ENCODE measurements at regions of chr14 and their contacts with region 1.

Region 1: DNA sequence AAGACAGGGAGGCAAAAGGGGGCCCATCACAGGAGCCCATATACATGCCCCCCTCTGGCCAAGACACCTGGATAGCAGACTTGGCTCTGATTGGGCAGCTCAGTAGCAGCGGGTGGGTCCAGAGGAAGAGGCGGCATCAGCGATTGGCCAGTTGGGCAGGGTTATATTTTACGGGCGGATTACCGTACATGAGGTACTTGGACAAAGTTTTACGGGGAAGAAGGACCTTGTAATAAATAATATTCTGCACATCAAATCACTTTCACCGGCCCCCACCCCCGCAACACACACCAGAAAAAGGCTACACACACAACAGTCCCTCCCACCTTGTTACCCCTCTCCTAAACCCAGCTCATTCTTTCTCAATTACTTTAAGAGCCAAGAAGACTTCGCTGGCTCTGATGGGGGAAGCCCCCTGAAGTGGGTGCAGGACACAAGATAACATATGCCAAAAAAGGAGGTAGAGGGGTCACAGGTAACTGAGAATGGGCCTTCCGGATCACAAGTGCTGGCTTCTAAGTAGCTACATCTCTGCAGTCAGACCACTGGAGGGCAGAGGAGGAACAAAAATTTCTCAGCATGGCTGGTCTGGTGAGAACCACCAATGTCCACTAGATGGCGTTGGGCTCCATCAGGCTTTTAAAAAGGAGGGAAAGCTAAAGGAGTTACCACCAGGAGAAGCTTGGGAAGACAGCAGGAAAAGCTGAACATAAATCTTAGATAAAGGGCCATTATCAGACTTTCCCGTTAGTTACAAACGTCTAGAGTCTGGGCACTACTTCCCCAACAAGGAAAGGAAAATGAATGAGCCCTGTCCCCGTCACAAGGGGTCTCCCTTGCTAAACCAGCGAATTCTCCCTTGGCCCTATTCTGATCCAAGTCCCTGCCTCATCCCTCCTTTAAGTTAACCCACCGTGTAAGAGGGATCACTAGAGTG is 11.4 kb upstream of the CDH24 start:
- DNase-seq: peak; percentile 84
- ATAC-seq: peak; percentile 79
- H3K4me3 Mint-ChIP-seq: peak overlapping the region; percentile 47
- H3K27ac Mint-ChIP-seq: peak overlapping the region; percentile 69
- H3K4me1 Mint-ChIP-seq: peaks cover 36% of the 10 kb centered on the region
- H3K27me3 Mint-ChIP-seq: no peaks in the 10 kb centered on the region
- CTCF ChIP-seq: peak; percentile 96

Region 2: GRCh38 chr14:22955702-22956569 is 112.8 kb before region 1 on chr14:
- CTCF ChIA-PET with region 1: interaction called, 18 read pairs
- POLR2A ChIA-PET with region 1: interaction called, 5 read pairs
- intact Hi-C with region 1: no loop called
- DNase-seq: no peak
- ATAC-seq: no peak
- H3K4me3 Mint-ChIP-seq: peak overlapping the region; percentile 93
- H3K27ac Mint-ChIP-seq: peak overlapping the region; percentile 93
- H3K4me1 Mint-ChIP-seq: peaks cover 25% of the 10 kb centered on the region
- H3K27me3 Mint-ChIP-seq: no peaks in the 10 kb centered on the region
- CTCF ChIP-seq: no peak

Region 3: DNA sequence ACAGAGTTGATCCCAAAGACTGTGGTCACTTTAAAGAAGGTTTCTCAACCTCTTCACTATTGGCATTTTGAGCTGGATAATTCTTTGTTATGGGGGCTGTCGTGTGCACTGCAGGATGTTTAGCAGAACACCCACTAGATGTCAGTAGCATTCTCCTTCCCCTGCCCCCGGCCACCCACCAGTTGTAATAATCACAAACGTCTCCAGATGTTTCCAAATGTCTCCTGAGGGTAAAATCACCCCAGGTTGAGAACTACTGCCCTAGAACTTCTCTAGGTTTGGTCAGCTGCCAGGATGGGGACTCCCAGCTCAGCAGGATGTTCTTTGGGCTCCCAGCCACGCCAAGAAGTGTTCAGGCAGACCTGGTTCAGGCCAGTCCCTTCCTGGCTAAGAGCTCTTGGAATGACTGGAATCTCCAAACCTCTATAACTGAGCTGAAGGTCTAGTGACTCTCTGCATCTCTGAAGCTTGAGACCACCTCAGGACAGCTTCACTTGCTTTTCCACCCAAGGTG is 73.9 kb before region 1 on chr14:
- CTCF ChIA-PET with region 1: interaction called, 518 read pairs
- POLR2A ChIA-PET with region 1: interaction called, 3 read pairs
- intact Hi-C with region 1: no loop called
- DNase-seq: peak; percentile 57
- ATAC-seq: peak; percentile 94
- H3K4me3 Mint-ChIP-seq: no peak overlapping the region
- H3K27ac Mint-ChIP-seq: no peak overlapping the region
- H3K4me1 Mint-ChIP-seq: peaks cover 3% of the 10 kb centered on the region
- H3K27me3 Mint-ChIP-seq: no peaks in the 10 kb centered on the region
- CTCF ChIP-seq: peak; percentile 59

Region 4: GRCh38 chr14:23057757-23058653 is 10.7 kb before region 1 on chr14:
- CTCF ChIA-PET with region 1: interaction called, 196 read pairs
- POLR2A ChIA-PET with region 1: interaction called, 12 read pairs
- intact Hi-C with region 1: no loop called
- DNase-seq: peak; percentile 91
- ATAC-seq: peak; percentile 73
- H3K4me3 Mint-ChIP-seq: peak overlapping the region; percentile 76
- H3K27ac Mint-ChIP-seq: no peak overlapping the region
- H3K4me1 Mint-ChIP-seq: peaks cover 19% of the 10 kb centered on the region
- H3K27me3 Mint-ChIP-seq: peaks cover 7% of the 10 kb centered on the region
- CTCF ChIP-seq: peak; percentile 94

Region 5: DNA sequence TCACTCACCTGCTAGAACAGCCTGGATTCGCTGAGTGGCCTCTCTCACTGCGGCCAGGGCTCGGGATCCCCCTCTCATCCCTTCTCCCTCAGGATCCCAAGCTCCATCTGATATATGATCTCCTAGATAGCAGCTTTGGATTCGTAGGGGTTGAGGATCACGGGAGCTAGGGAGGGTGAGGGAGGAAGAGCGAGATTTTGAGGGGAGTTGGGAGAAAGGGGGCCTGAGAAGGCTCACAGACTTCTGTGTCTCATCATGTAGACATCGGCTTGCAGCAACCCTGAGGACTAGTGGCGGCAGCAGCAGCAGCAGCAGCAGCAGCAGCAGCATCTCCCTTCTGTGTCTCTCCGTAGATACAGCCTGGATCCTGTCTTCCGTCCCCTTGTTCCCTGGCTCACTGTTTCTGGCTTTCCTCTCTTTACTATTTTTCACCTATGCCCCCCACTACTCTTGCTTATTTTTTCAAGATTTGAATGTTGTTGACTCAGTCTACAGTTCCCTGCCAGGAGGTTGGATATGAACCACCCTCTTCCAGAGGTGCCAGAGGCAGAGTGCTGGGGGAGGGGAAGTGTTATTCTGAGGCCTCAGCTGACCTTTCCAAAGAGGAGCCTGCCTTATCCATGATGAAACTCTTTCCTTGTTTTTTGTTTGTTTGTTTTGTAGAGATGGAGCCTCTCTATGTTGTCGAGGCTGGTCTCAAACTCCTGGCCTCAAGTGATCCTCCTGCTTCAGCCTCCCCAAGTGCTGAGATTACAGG is 36.0 kb after region 1 on chr14 and contains the start of gene CIROP:
- CTCF ChIA-PET with region 1: interaction called, 20 read pairs
- POLR2A ChIA-PET with region 1: no interaction called
- intact Hi-C with region 1: no loop called
- DNase-seq: no peak
- ATAC-seq: no peak
- H3K4me3 Mint-ChIP-seq: no peak within 1 kb of the TSS
- H3K27ac Mint-ChIP-seq: no peak within 1 kb of the TSS
- H3K4me1 Mint-ChIP-seq: no peaks in the 10 kb centered on the region
- H3K27me3 Mint-ChIP-seq: no peaks in the 10 kb centered on the region
- CTCF ChIP-seq: no peak
- total RNA-seq, gene CIROP: not detected

Region 6: GRCh38 chr14:23186913-23187654 is 118.3 kb after region 1 on chr14:
- CTCF ChIA-PET with region 1: interaction called, 27 read pairs
- POLR2A ChIA-PET with region 1: no interaction called
- intact Hi-C with region 1: no loop called
- DNase-seq: peak; percentile 55
- ATAC-seq: peak; percentile 62
- H3K4me3 Mint-ChIP-seq: no peak overlapping the region
- H3K27ac Mint-ChIP-seq: no peak overlapping the region
- H3K4me1 Mint-ChIP-seq: no peaks in the 10 kb centered on the region
- H3K27me3 Mint-ChIP-seq: no peaks in the 10 kb centered on the region
- CTCF ChIP-seq: peak; percentile 80